ENCODE measurements at regions of chr5 and their contacts with region 1.

Region 1: GRCh38 chr5:153964880-153965645 is 73.6 kb downstream of the FAM114A2 start:
- DNase-seq: peak; percentile 57
- ATAC-seq: peak; percentile 47
- H3K4me3 Mint-ChIP-seq: no peak overlapping the region
- H3K27ac Mint-ChIP-seq: no peak overlapping the region
- H3K4me1 Mint-ChIP-seq: peaks cover 13% of the 10 kb centered on the region
- H3K27me3 Mint-ChIP-seq: peaks cover 5% of the 10 kb centered on the region

Region 2: GRCh38 chr5:152532714-152533113 is 1432.3 kb before region 1 on chr5:
- CTCF ChIA-PET with region 1: interaction called, 31 read pairs
- POLR2A ChIA-PET with region 1: no interaction called
- DNase-seq: no peak
- ATAC-seq: no peak
- H3K4me3 Mint-ChIP-seq: no peak overlapping the region
- H3K27ac Mint-ChIP-seq: no peak overlapping the region
- H3K4me1 Mint-ChIP-seq: peaks cover 7% of the 10 kb centered on the region
- H3K27me3 Mint-ChIP-seq: peaks cover 12% of the 10 kb centered on the region

Region 3: GRCh38 chr5:152560512-152561137 is 1404.4 kb before region 1 on chr5:
- CTCF ChIA-PET with region 1: interaction called, 11 read pairs
- POLR2A ChIA-PET with region 1: interaction called, 3 read pairs
- DNase-seq: peak; percentile 47
- ATAC-seq: no peak
- H3K4me3 Mint-ChIP-seq: no peak overlapping the region
- H3K27ac Mint-ChIP-seq: no peak overlapping the region
- H3K4me1 Mint-ChIP-seq: no peaks in the 10 kb centered on the region
- H3K27me3 Mint-ChIP-seq: no peaks in the 10 kb centered on the region

Region 4: GRCh38 chr5:153985498-153985897 is 20.4 kb after region 1 on chr5:
- CTCF ChIA-PET with region 1: no interaction called
- POLR2A ChIA-PET with region 1: no interaction called
- DNase-seq: no peak
- ATAC-seq: no peak
- H3K4me3 Mint-ChIP-seq: no peak overlapping the region
- H3K27ac Mint-ChIP-seq: no peak overlapping the region
- H3K4me1 Mint-ChIP-seq: no peaks in the 10 kb centered on the region
- H3K27me3 Mint-ChIP-seq: no peaks in the 10 kb centered on the region

Measured in activated CD8-positive, alpha-beta T cell treated with anti-CD3 and anti-CD28 coated beads, Interleukin-2, amount 10 ng/mL, durations not matched to agents 7 days and 5 days (primary cell).